Activated CD4-positive, alpha-beta memory T cell treated with anti-CD3 and anti-CD28 coated beads for 36 hours (primary cell): ENCODE measurements at regions of chr2 and their contacts with region 1.

Region 1: DNA sequence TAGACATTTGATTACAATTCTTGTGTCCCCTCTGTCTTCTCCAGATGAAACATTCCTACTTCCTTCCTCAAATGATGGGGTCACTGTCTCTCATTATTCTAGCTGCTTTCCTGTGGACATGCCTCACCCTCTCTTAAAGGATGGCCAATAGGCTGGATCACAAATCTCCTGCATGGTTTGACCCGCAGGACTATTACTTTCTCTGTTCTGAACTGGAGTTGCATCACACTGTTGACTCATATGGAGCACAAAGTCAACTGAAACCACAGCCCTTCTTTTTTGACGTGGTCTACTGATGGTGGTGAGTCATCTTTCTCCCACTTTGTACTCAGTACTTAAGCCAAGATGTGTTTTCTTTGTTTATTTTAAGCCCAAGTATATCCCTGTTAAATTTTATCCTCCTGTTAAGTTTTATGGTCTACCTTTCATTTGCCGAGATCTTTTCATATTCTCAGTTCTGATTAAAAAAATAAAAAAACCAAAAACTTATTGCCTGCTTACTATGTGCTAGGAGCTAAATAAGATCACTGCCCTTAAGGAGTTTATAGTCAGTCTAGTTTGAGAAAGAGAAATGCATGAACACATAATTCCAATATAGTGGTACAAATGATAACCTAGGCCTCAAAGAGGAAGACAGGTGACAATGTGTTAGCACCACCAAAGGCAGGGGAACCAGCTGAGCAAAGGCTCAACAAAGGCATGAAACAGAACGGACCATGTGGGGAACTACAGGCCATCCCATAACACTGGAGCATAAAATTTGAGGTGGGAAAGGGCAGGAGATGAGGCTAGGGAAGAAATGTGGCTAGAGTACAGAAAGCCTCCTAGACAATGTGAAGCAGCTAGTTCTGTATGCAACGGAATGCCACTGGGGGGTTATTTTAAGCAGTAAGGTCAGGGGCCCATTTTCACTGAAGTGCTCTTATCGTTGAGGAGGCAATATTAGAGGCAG is 67.6 kb upstream of the ZFP36L2 start:
- DNase-seq: peak; percentile 71
- H3K4me3 Mint-ChIP-seq: no peak overlapping the region
- H3K27ac Mint-ChIP-seq: peak overlapping the region; percentile 58
- H3K4me1 Mint-ChIP-seq: peaks cover 28% of the 10 kb centered on the region
- H3K27me3 Mint-ChIP-seq: no peaks in the 10 kb centered on the region

Region 2: GRCh38 chr2:42935692-42936681 is 358.0 kb before region 1 on chr2:
- CTCF ChIA-PET with region 1: no interaction called
- POLR2A ChIA-PET with region 1: no interaction called
- intact Hi-C with region 1: no loop called
- DNase-seq: peak; percentile 65
- H3K4me3 Mint-ChIP-seq: no peak overlapping the region
- H3K27ac Mint-ChIP-seq: no peak overlapping the region
- H3K4me1 Mint-ChIP-seq: no peaks in the 10 kb centered on the region
- H3K27me3 Mint-ChIP-seq: no peaks in the 10 kb centered on the region

Region 3: GRCh38 chr2:43100883-43101662 is 192.9 kb before region 1 on chr2:
- CTCF ChIA-PET with region 1: no interaction called
- POLR2A ChIA-PET with region 1: no interaction called
- intact Hi-C with region 1: no loop called
- DNase-seq: no peak
- H3K4me3 Mint-ChIP-seq: no peak overlapping the region
- H3K27ac Mint-ChIP-seq: no peak overlapping the region
- H3K4me1 Mint-ChIP-seq: no peaks in the 10 kb centered on the region
- H3K27me3 Mint-ChIP-seq: no peaks in the 10 kb centered on the region

Region 4: GRCh38 chr2:43280994-43281393 is 13.0 kb before region 1 on chr2:
- CTCF ChIA-PET with region 1: no interaction called
- POLR2A ChIA-PET with region 1: no interaction called
- intact Hi-C with region 1: loop called (anchors 1 kb)
- DNase-seq: no peak
- H3K4me3 Mint-ChIP-seq: no peak overlapping the region
- H3K27ac Mint-ChIP-seq: no peak overlapping the region
- H3K4me1 Mint-ChIP-seq: peaks cover 7% of the 10 kb centered on the region
- H3K27me3 Mint-ChIP-seq: no peaks in the 10 kb centered on the region

Region 5: DNA sequence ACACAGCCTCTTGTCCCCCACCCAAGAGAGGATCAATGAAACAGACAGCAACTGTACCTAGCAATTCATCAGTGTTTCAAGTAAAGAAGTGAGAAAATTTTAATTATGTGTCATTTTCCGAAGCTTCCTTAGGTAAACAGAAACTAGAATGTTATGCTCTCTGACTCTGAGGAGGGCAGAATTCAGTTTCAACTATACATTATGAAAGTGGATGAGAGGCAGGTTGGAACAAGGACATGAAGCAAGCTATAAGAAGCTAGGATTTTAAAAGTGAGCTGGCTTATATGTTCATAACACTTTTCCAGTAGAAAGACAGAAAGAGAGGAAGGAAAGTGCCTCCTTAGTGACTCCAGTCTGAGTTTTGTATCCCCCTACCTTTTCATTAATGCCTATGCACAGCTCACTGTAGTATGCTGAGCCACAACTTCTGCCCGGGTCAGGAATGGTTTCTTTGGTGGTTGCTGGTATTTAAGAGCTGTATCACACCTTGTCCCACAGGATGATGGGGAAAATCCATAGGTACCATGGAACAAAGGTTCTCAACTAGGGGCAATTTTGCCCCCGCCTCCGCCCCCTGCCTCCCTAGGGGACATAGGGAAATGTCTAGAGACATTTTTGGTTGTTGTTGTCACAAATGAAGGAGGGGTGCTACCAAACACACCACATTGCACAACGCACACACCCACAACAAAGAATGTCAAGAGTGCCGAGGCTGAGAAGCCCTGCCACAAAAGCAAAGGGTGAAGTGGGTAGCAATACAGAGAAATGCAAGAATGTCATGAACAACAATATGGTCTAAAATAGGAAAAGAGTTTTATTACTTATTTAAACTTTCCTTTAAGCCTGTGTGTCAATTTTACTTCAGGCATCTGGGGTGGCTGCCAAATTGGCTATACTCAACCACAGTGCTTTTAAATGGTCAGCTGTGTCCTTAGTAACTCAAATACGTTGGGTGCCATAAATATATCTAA is 93.4 kb after region 1 on chr2:
- CTCF ChIA-PET with region 1: no interaction called
- POLR2A ChIA-PET with region 1: interaction called, 3 read pairs
- intact Hi-C with region 1: loop called (anchors 1 kb)
- DNase-seq: peak; percentile 20
- H3K4me3 Mint-ChIP-seq: no peak overlapping the region
- H3K27ac Mint-ChIP-seq: peak overlapping the region; percentile 28
- H3K4me1 Mint-ChIP-seq: peaks cover 31% of the 10 kb centered on the region
- H3K27me3 Mint-ChIP-seq: no peaks in the 10 kb centered on the region

Region 6: GRCh38 chr2:43478411-43479086 is 184.5 kb after region 1 on chr2:
- CTCF ChIA-PET with region 1: no interaction called
- POLR2A ChIA-PET with region 1: no interaction called
- intact Hi-C with region 1: loop called (anchors 5 kb)
- DNase-seq: no peak
- H3K4me3 Mint-ChIP-seq: no peak overlapping the region
- H3K27ac Mint-ChIP-seq: no peak overlapping the region
- H3K4me1 Mint-ChIP-seq: peaks cover 17% of the 10 kb centered on the region
- H3K27me3 Mint-ChIP-seq: no peaks in the 10 kb centered on the region